Left ventricle myocardium superior (tissue), 1 donor: ENCODE measurements at regions of chr6 and their contacts with region 1.

Region 1: DNA sequence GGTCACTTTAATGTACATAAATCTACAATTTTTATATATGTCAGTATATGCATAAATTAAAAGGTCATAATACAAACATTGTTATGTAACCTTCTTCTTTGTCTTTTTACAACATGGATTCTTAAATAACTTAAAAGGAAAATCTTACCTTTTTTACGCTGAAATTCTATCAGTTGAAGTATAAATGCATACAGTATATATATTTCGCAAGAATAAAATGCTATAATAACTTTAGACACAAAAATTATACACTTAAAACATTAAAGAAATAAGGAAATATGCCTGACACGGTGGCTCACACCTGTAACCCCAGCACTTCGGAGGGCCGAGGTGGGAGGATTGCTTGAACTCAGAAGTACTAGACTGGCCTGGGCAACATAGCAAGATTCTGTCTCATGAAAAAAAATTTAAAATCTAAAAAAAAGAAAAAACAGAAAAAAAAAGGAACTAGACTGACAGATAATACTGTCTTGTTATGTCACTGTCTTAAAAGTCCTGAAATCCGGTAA is 109.8 kb upstream of the MAP7 start:
- DNase-seq: no peak
- ATAC-seq: no peak

Region 2: DNA sequence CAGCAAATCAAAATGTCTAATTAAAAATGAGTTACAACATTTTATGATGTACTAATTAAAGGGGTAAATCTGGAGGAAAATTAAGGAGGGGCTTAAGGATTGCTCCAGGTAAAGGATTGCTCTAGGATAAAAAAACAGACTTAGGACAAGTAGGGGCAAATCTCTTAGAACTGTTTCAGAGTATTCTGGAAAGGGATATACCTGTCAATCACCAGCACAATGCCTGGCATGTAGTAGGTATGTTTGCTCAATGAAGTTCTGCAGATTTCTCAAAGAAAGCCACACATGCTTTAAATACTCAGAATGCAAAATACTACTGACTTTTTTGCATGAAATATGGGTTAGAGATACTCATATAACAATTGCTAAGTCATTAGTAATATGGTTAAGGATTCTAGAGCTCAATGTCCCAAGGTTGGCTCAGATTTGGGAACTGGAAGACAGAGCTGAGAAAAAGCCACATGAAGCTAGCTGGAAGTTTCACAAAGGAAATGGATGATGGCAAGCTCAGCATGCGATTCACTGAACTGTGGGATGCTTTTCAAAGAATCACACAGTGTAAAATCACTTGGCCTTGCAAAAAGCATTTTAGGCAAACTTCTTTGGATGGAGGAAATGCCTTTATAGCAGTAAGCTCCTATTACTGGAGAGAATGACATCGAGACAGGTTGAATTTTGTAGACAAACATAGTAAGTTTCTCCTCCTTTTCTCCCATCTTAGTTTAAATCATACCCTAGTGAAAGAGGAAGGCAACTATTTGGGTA is 59.4 kb after region 1 on chr6:
- intact Hi-C with region 1: loop called (anchors 2 kb)
- DNase-seq: no peak
- ATAC-seq: peak; percentile 23

Region 3: GRCh38 chr6:136737871-136738691 is 78.0 kb after region 1 on chr6:
- intact Hi-C with region 1: no loop called
- DNase-seq: no peak
- ATAC-seq: peak; percentile 79